GM12878 (cell line): ENCODE measurements at regions of chr9 and their contacts with region 1.

Region 1: DNA sequence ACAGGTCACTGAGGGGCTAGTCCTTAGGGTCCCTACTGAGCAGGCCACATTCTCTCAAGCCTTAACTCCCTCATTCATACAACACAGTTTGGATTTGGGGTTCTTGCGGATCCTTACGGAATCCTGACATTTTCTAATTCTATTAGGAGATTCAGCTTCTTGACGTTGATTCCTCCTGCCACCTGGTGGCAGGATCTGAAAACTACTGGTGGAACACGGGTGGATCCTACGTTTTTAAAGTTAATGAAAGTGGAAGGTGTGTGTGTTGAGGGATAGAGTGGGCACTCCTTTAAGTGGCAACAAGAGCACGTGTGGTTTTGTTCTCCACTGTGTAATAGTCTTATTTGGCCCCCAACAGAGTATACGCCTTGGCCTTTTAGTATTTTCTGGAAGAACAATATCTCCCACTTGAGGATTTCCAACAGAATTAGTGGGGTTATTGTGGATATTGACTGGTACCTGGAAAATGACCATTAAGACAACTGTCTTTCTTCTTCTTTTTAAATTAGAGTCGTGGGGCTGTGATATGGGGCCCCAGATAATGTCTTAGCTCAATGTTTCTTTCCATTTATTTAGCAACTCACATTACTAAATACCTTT is 25.2 kb downstream of the SLC28A3 start:
- DNase-seq: no peak
- ATAC-seq: peak; percentile 84
- H3K4me3 ChIP-seq: no peak overlapping the region
- H3K27ac ChIP-seq: no peak overlapping the region
- H3K4me1 ChIP-seq: no peaks in the 10 kb centered on the region; the same call in 1 of the 2 replicates
- H3K27me3 ChIP-seq: no peaks in the 10 kb centered on the region
- CTCF ChIP-seq: peak; percentile 71 to 87 (median 79); a peak in 5 of 6 replicates
- EP300 ChIP-seq: no peak
- POLR2A ChIP-seq: no peak
- RAD21 ChIP-seq: peak; percentile 95

Region 2: GRCh38 chr9:83920927-83921707 is 394.3 kb before region 1 on chr9 and contains the start of gene KIF27:
- CTCF ChIA-PET with region 1: interaction called, 4 read pairs
- POLR2A ChIA-PET with region 1: no interaction called
- RAD21 ChIA-PET with region 1: interaction called, 4 read pairs
- SMC1A ChIA-PET with region 1: interaction called, 5 read pairs
- in situ Hi-C with region 1: no loop called
- intact Hi-C with region 1: loop called (anchors 5 kb)
- DNase-seq: peak; percentile 80
- ATAC-seq: peak; percentile 95
- H3K4me3 ChIP-seq: peak within 1 kb of the TSS; percentile 79
- H3K27ac ChIP-seq: peak within 1 kb of the TSS; percentile 79
- H3K4me1 ChIP-seq: peaks cover 9% of the 10 kb centered on the region
- H3K27me3 ChIP-seq: no peaks in the 10 kb centered on the region
- CTCF ChIP-seq: peak in 2 of 3 experiments; percentile 11 to 19; a peak in 3 of 6 replicates
- EP300 ChIP-seq: no peak
- POLR2A ChIP-seq: peak; percentile 81
- RAD21 ChIP-seq: no peak
- polyA plus RNA-seq, gene KIF27: 0.64 to 0.92 TPM

Region 3: DNA sequence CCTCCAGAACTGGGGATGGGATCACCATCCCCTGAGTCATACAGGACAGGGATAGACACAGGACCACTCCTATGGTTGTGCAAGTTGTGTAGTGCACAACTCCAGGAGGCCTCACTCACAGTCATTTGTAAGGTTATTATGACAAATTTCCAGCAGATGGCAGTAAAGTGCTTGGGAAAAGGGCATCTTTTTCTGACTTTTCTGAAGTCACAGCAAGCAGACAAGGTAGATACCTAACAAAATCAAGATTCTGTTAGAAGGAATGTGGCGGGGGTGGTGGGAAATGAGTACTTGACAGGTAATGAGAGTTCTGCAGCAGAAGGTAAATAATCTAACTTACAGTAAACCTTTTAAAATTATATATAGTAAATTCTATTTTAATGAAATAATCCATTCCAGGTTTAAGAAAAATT is 377.5 kb before region 1 on chr9:
- CTCF ChIA-PET with region 1: interaction called, 33 read pairs
- POLR2A ChIA-PET with region 1: no interaction called
- RAD21 ChIA-PET with region 1: interaction called, 10 read pairs
- SMC1A ChIA-PET with region 1: interaction called, 14 read pairs
- in situ Hi-C with region 1: loop called (anchors 5 kb)
- intact Hi-C with region 1: loop called (anchors 1 kb)
- DNase-seq: no peak
- ATAC-seq: peak; percentile 88
- H3K4me3 ChIP-seq: no peak overlapping the region
- H3K27ac ChIP-seq: no peak overlapping the region
- H3K4me1 ChIP-seq: no peaks in the 10 kb centered on the region
- H3K27me3 ChIP-seq: no peaks in the 10 kb centered on the region
- CTCF ChIP-seq: peak; percentile 47 to 72 (median 65); a peak in 5 of 6 replicates
- EP300 ChIP-seq: no peak
- POLR2A ChIP-seq: no peak
- RAD21 ChIP-seq: peak; percentile 88

Region 4: GRCh38 chr9:84170521-84171141 is 144.7 kb before region 1 on chr9:
- CTCF ChIA-PET with region 1: interaction called, 25 read pairs
- POLR2A ChIA-PET with region 1: no interaction called
- RAD21 ChIA-PET with region 1: interaction called, 7 read pairs
- SMC1A ChIA-PET with region 1: interaction called, 9 read pairs
- in situ Hi-C with region 1: loop called (anchors 10 kb)
- intact Hi-C with region 1: loop called (anchors 5 kb)
- DNase-seq: no peak
- ATAC-seq: no peak
- H3K4me3 ChIP-seq: no peak overlapping the region
- H3K27ac ChIP-seq: no peak overlapping the region
- H3K4me1 ChIP-seq: no peaks in the 10 kb centered on the region
- H3K27me3 ChIP-seq: no peaks in the 10 kb centered on the region; a peak in 1 of 4 replicates
- CTCF ChIP-seq: no peak
- EP300 ChIP-seq: no peak
- POLR2A ChIP-seq: no peak
- RAD21 ChIP-seq: no peak

Region 5: DNA sequence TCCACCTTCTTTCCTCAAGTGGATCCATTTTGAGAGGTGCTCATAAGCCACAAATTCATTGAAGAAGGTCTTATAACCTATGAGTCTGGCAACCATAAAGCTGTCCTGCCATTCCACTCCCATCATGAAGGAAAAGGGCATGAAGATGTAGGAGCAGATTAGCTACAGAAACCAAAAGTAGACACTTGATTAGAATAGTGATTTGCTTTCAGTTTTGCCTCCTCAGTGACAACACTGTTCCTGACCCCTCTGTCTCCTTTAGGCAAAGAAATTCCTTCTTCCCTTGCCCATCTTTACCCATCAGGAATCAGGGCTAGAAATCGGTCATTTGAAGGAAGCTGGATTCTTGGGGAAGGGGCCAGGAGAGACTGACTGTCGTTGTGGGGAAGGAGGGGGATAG is 30.0 kb before region 1 on chr9:
- CTCF ChIA-PET with region 1: interaction called, 5 read pairs
- POLR2A ChIA-PET with region 1: interaction called, 3 read pairs
- RAD21 ChIA-PET with region 1: interaction called, 10 read pairs
- SMC1A ChIA-PET with region 1: interaction called, 9 read pairs
- in situ Hi-C with region 1: no loop called
- intact Hi-C with region 1: no loop called
- DNase-seq: no peak
- ATAC-seq: peak; percentile 58; the same call in 2 of the 3 replicates
- H3K4me3 ChIP-seq: peak overlapping the region; percentile 47; the same call in 1 of the 2 replicates
- H3K27ac ChIP-seq: no peak overlapping the region
- H3K4me1 ChIP-seq: peaks cover 5% of the 10 kb centered on the region; the same call in 1 of the 2 replicates
- H3K27me3 ChIP-seq: no peaks in the 10 kb centered on the region
- CTCF ChIP-seq: no peak
- EP300 ChIP-seq: no peak
- POLR2A ChIP-seq: no peak
- RAD21 ChIP-seq: no peak

Region 6: GRCh38 chr9:84296146-84296843 is 19.1 kb before region 1 on chr9:
- CTCF ChIA-PET with region 1: interaction called, 92 read pairs
- POLR2A ChIA-PET with region 1: interaction called, 3 read pairs
- RAD21 ChIA-PET with region 1: interaction called, 23 read pairs
- SMC1A ChIA-PET with region 1: interaction called, 82 read pairs
- in situ Hi-C with region 1: no loop called
- intact Hi-C with region 1: no loop called
- DNase-seq: peak; percentile 66
- ATAC-seq: peak; percentile 80
- H3K4me3 ChIP-seq: no peak overlapping the region
- H3K27ac ChIP-seq: peak overlapping the region; percentile 86
- H3K4me1 ChIP-seq: peaks cover 46% of the 10 kb centered on the region
- H3K27me3 ChIP-seq: no peaks in the 10 kb centered on the region
- CTCF ChIP-seq: no peak
- EP300 ChIP-seq: peak; percentile 63 to 70; a peak in 3 of 4 replicates
- POLR2A ChIP-seq: 0 out of 2 replicates have a peak, but pooled peaks have one; percentile 18
- RAD21 ChIP-seq: no peak

Region 7: GRCh38 chr9:84357275-84357674 is 41.9 kb after region 1 on chr9:
- CTCF ChIA-PET with region 1: no interaction called
- POLR2A ChIA-PET with region 1: no interaction called
- RAD21 ChIA-PET with region 1: no interaction called
- SMC1A ChIA-PET with region 1: no interaction called
- in situ Hi-C with region 1: no loop called
- intact Hi-C with region 1: no loop called
- DNase-seq: no peak
- ATAC-seq: no peak
- H3K4me3 ChIP-seq: no peak overlapping the region
- H3K27ac ChIP-seq: no peak overlapping the region
- H3K4me1 ChIP-seq: no peaks in the 10 kb centered on the region
- H3K27me3 ChIP-seq: no peaks in the 10 kb centered on the region
- CTCF ChIP-seq: no peak
- EP300 ChIP-seq: no peak
- POLR2A ChIP-seq: no peak
- RAD21 ChIP-seq: no peak